B cell (primary cell): ENCODE measurements at regions of chr2 and their contacts with region 1.

Region 1: DNA sequence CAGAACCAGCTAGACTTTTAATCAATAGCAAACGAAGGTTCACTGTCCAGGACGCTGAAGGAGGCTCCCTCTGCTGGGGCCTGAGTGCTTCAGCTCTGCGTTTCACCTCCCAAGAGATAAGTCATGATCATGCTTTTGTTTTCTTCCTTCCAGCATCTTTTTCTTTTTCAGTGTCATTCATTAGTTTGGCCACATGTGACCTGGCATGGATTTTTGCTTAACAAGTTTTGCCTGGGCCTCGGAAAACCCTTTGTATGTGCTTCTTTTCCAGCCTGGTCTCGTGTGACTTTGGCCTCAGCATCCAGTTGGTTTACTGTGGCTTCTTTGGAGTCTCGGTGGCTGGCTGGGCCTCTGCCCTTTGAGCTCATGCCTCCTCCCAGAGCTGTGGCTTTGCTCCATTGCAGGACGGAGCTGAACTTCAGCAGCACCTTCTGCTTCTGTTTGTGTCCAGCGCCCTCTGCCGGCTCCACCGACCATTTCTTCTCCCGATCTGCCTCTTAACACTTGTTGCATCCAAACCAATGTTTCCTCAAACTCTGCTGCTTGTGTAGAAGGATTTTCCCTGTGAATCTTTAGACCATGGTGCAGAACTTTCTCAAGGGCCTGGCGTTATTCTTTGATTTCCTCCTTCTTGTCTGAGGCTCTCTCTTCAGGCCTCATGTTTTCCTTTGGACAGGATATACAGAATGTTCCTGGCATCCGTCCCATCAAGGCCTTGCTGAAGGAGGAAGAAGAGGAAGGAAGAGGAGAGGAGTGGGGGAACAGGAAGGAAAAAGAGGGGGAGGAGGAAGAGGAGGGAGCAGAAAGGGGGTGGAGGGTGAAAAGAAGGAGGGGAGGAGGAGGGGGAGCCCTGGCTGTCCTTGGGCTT is 23.6 kb upstream of the HES6 start:
- DNase-seq: peak; percentile 78
- ATAC-seq: peak; percentile 66
- H3K4me3 ChIP-seq: no peak overlapping the region
- H3K4me3 Mint-ChIP-seq: no peak overlapping the region
- H3K27ac ChIP-seq: no peak overlapping the region
- H3K27ac Mint-ChIP-seq: no peak overlapping the region
- H3K4me1 ChIP-seq: peaks cover 0 to 4% of the 10 kb centered on the region in 2 donors
- H3K4me1 Mint-ChIP-seq: peaks cover 1% of the 10 kb centered on the region
- H3K27me3 ChIP-seq: no peaks in the 10 kb centered on the region
- H3K27me3 Mint-ChIP-seq: no peaks in the 10 kb centered on the region
- CTCF ChIP-seq: peak; percentile 84

Region 2: DNA sequence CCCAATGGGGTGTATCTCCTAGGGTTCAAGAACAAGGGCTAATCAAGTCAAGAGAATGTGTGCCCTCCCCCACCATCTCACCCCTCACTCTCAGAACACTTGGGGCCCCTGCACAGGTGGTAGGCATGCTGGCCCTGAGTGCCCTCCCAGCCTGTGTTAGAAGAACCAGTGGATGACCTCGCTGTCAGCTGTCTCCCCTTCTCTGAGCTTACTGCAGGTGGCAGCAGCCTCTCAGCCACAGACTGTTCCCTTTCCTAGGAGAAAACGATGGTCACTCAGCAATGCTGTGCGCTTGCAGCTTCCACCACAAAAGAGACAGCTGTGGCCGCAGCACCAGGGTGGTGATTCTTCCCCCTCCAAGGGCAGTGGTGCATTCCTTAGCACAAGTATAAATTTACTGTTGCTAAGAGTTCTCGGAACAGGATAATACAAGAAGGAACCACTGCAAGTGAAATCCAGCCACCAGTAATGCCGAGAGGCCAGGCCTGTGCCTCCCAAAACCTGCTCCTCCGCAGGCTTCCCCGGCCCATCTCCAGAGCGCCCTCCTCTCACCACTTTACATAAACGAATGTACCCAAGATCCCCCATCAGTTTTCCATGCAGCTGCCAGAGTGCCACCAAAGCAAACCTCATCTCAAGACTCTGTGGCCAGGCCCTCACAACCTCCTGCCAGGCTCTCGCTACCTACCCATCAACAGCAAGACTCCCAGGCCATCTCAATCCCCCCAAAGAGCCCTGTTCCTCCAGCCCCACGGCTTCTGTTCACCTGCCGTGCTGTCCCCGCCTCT is 404.9 kb before region 1 on chr2:
- CTCF ChIA-PET with region 1: interaction called, 46 read pairs
- POLR2A ChIA-PET with region 1: no interaction called
- intact Hi-C with region 1: no loop called
- DNase-seq: peak; percentile 43
- ATAC-seq: peak; percentile 80
- H3K4me3 ChIP-seq: no peak overlapping the region
- H3K4me3 Mint-ChIP-seq: peak overlapping the region; percentile 62
- H3K27ac ChIP-seq: no peak overlapping the region
- H3K27ac Mint-ChIP-seq: no peak overlapping the region
- H3K4me1 ChIP-seq: no peaks in the 10 kb centered on the region
- H3K4me1 Mint-ChIP-seq: peaks cover 17% of the 10 kb centered on the region
- H3K27me3 ChIP-seq: peaks cover 0 to 37% (median 13%) of the 10 kb centered on the region in 4 experiments
- H3K27me3 Mint-ChIP-seq: peaks cover 44% of the 10 kb centered on the region
- CTCF ChIP-seq: peak; percentile 43

Region 3: DNA sequence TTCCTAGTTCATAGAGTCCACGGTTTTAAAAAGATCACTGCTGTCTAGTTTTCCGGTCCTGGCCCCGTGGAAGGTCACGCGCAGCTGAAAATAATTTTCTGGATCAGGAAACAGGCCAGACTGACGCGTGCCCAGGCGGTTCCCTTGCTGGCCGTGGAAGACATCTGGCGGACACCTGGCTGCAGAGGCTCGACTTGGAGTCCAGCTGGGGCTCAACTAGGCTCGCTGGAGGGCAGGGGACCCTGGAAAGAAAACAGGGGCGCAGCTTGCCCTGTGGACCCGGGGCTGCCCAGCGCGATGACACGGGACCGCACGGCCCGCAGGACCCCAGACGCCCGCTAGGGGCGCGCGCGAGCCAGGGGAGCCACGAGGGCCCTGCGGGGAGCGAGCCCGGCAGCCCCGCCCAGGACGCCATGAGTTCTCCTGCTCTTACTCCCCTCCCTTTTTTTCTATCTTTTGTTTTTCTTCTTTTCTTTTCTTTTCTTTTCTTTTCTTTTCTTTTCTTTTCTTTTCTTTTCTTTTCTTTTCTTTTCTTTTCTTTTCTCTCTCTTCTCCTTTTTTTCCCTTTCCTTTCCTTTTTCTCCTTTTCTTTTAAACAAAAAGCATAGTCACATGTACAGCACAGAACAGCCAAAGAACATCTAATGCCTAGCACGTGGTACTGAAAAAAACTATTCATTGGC is 339.8 kb before region 1 on chr2:
- CTCF ChIA-PET with region 1: interaction called, 8 read pairs
- POLR2A ChIA-PET with region 1: no interaction called
- intact Hi-C with region 1: loop called (anchors 5 kb)
- DNase-seq: peak; percentile 83
- ATAC-seq: peak; percentile 99
- H3K4me3 ChIP-seq: peak overlapping the region in 3 of 5 experiments; percentile 15 to 41 (median 30)
- H3K4me3 Mint-ChIP-seq: peak overlapping the region; percentile 65
- H3K27ac ChIP-seq: no peak overlapping the region
- H3K27ac Mint-ChIP-seq: peak overlapping the region; percentile 15
- H3K4me1 ChIP-seq: peaks cover 0 to 5% of the 10 kb centered on the region in 2 donors
- H3K4me1 Mint-ChIP-seq: peaks cover 18% of the 10 kb centered on the region
- H3K27me3 ChIP-seq: peaks cover 0 to 8% (median 0%) of the 10 kb centered on the region in 4 experiments
- H3K27me3 Mint-ChIP-seq: no peaks in the 10 kb centered on the region
- CTCF ChIP-seq: peak; percentile 99

Region 4: DNA sequence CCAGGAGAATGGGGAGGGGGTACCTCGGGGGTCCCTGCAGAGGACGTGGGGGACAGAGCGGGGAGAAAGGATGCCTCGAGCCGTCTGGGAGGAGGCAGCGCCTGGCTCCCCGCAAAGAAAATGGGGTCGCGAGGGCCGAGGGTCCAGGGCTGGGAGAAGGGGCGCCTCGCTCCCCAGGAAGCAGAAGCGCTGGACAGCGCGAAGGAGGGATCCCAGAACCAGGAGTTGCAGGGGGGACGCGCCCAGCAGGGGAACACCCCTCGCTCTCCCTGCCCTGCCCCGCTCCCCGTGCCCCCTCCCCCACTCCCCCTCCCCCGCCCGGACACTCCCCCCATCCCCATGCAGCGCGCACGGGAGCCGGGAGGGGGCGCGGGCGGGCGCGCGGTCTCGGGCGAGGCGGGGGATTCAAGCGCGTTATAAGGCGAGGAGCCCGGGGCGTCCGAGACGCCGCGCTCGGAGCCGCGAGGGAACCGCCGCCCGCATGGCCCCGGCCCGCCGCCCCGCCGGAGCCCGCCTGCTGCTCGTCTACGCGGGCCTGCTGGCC is 104.8 kb before region 1 on chr2 and contains the start of gene ERFE:
- CTCF ChIA-PET with region 1: interaction called, 22 read pairs
- POLR2A ChIA-PET with region 1: no interaction called
- intact Hi-C with region 1: loop called (anchors 1 kb)
- DNase-seq: peak; percentile 69
- ATAC-seq: peak; percentile 78
- H3K4me3 ChIP-seq: peak within 1 kb of the TSS in 2 of 5 experiments; percentile 30
- H3K4me3 Mint-ChIP-seq: peak within 1 kb of the TSS; percentile 84
- H3K27ac ChIP-seq: no peak within 1 kb of the TSS
- H3K27ac Mint-ChIP-seq: no peak within 1 kb of the TSS
- H3K4me1 ChIP-seq: peaks cover 16 to 19% of the 10 kb centered on the region in 2 donors
- H3K4me1 Mint-ChIP-seq: peaks cover 15% of the 10 kb centered on the region
- H3K27me3 ChIP-seq: peaks cover 0 to 28% (median 8%) of the 10 kb centered on the region in 4 experiments
- H3K27me3 Mint-ChIP-seq: peaks cover 15% of the 10 kb centered on the region
- CTCF ChIP-seq: peak; percentile 62
- total RNA-seq, gene ERFE: 0.17 and 0.19 TPM in 2 replicates

Region 5: DNA sequence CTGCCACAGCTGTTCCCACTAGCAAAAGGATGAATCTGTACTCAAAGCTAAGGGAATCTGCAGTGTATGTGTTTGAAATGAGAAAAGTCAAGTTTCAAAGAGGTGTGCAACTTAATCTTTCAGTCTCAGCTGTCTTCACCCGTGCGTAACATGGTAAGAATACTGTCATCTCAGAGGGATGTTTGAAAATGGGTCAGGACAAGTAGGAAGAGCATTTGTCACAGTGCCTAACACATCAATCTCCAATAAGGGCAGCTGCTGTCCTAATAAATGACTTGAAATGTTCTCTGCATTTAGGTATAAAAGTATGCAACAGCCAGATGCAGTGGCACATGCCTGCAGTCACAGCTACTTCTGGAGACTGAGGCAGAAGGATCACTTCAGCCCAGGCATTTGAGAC is 73.0 kb before region 1 on chr2:
- CTCF ChIA-PET with region 1: no interaction called
- POLR2A ChIA-PET with region 1: interaction called, 10 read pairs
- intact Hi-C with region 1: no loop called
- DNase-seq: no peak
- ATAC-seq: no peak
- H3K4me3 ChIP-seq: no peak overlapping the region
- H3K4me3 Mint-ChIP-seq: no peak overlapping the region
- H3K27ac ChIP-seq: no peak overlapping the region
- H3K27ac Mint-ChIP-seq: no peak overlapping the region
- H3K4me1 ChIP-seq: no peaks in the 10 kb centered on the region
- H3K4me1 Mint-ChIP-seq: peaks cover 2% of the 10 kb centered on the region
- H3K27me3 ChIP-seq: no peaks in the 10 kb centered on the region
- H3K27me3 Mint-ChIP-seq: no peaks in the 10 kb centered on the region
- CTCF ChIP-seq: no peak

Region 6: DNA sequence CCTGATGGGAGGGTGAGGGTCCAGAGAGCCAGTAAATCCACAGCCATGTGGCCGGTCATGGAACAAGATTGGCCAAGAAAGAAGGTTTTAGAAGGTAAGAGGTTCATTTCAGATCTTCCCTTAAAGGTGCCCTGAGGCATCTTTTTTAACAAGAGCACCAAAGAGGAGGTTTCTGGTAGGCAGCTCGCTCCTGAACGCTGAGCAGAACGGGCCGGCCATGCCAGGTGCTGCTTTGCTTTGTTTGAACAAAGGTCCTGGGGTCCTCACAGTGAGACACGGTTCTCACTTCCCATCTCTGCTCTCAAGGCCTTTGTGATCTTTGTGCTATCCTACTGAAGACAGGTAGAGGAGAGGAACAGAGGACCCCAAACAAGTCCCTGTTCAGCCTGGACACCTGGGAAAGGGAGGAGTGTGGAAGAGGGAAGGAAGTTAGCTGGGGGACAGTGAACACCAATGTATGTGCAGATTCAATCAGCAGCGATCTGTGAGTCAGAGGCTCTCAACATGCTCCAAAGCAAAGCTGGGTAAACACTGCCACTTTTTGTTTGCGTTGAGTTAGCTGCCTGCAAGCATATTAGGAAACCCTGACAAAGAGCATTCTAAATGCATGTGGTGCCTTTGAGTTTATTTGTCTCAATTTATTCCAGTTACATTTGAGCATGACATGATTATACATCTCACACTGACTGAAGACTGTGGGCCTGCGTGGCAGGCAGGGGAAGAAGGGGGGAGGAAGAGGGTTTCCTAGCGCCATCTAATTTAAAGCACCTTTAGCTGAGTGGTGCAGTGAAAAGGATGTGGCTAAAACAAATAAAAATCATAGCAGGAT is 265.7 kb after region 1 on chr2:
- CTCF ChIA-PET with region 1: no interaction called
- POLR2A ChIA-PET with region 1: no interaction called
- intact Hi-C with region 1: no loop called
- DNase-seq: no peak
- ATAC-seq: no peak
- H3K4me3 ChIP-seq: no peak overlapping the region
- H3K4me3 Mint-ChIP-seq: no peak overlapping the region
- H3K27ac ChIP-seq: no peak overlapping the region
- H3K27ac Mint-ChIP-seq: no peak overlapping the region
- H3K4me1 ChIP-seq: no peaks in the 10 kb centered on the region
- H3K4me1 Mint-ChIP-seq: no peaks in the 10 kb centered on the region
- H3K27me3 ChIP-seq: peaks cover 0 to 5% (median 0%) of the 10 kb centered on the region in 4 experiments
- H3K27me3 Mint-ChIP-seq: peaks cover 9% of the 10 kb centered on the region
- CTCF ChIP-seq: no peak